Tibial artery (tissue), 4 donors: ENCODE measurements at regions of chr10 and their contacts with region 1.

Region 1: DNA sequence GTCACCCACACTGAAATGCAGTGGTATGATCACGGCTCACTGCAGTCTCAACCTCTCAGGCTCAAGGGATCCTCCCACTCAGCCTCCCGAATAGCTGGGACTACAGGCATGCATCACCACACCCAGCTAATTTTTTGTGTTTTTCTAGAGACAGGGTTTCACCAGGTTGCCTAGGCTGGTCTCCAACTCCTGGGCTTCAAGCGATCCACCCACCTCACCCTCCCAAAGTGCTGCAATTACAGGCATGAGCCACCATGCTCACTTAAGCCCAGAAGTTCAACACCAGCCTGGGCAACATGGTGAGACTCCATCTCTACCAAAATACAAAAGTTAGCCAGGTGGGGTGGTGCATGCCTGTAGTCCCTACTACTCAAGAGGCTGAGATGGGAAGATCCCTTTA is 33.5 kb downstream of the GDI2 start:
- DNase-seq: no peak
- H3K4me3 ChIP-seq: no peak overlapping the region
- H3K27ac ChIP-seq: no peak overlapping the region
- H3K4me1 ChIP-seq: peaks cover 0 to 43% (median 22%) of the 10 kb centered on the region in 4 donors
- H3K27me3 ChIP-seq: no peaks in the 10 kb centered on the region
- CTCF ChIP-seq: no peak

Region 2: DNA sequence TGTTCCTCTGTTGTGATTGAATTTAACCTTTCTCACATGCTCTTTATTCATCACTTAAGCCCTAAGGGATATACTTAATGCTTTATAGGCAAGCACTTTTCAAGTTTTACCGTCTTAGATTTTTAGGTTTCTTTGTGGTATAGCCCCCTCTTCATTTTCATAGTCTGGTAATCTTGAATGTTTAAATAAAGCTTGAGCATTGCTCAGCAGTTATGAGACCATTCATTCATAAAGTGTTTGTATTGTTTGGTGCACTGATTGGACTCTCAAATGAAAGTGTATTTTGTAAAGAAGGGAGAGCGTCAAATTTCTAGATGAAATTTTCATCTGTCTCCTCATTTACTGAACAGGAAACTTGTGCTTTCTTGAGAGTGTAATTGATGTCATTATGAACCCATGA is 69.9 kb before region 1 on chr10:
- intact Hi-C with region 1: loop called (anchors 10 kb)
- DNase-seq: no peak
- H3K4me3 ChIP-seq: no peak overlapping the region
- H3K27ac ChIP-seq: no peak overlapping the region
- H3K4me1 ChIP-seq: peaks cover 0 to 11% (median 2%) of the 10 kb centered on the region in 4 donors
- H3K27me3 ChIP-seq: no peaks in the 10 kb centered on the region
- CTCF ChIP-seq: no peak